ENCODE measurements at regions of chr9 and their contacts with region 1.

Region 1: DNA sequence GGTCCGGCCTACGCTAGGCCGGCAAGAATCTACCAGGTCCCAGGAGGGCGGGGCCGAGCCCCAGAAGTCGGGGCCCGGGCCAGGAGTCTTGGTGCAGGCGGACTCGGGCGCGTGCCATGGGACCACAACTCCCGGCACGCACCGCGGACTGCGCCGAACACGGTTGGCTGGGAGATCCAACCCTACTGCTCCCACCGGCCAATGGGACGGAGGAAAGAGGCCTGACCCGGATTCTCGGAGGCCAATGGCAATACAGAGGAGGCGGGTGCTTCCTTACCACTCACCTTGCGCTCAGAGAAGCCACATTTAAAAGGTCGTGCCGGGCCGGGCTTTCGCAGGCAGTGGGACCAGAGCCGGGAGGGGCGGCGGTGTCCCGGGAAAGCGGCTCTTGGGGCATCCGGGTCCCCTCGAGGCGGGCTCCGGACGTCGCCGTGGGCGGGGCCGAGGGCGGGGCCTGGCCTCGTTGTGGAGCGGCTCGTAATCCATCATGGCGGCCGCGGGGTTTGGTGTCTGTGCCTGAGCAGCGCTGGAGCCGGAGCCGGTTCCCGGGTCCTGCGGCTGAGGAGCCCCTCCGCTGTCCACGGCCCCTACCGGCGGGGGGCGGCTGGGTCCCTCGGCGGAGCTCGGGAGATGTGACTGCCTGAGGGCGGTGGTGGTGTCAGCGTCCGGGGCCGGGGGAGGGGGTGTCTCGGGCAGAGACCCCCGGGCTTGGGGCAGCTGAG is 19.1 kb downstream of the EXOSC2 start:
- DNase-seq: peak; percentile 91 to 97
- ATAC-seq: peak; percentile 96 to 99 (median 97)
- H3K4me3 ChIP-seq: peak overlapping the region; percentile 73
- H3K4me3 Mint-ChIP-seq: peak overlapping the region; percentile 96
- H3K27ac ChIP-seq: peak overlapping the region; percentile 92
- H3K27ac Mint-ChIP-seq: peak overlapping the region; percentile 90 to 95
- H3K4me1 ChIP-seq: peaks cover 19% of the 10 kb centered on the region
- H3K4me1 Mint-ChIP-seq: peaks cover 30 to 33% of the 10 kb centered on the region in 2 donors
- H3K27me3 ChIP-seq: no peaks in the 10 kb centered on the region
- H3K27me3 Mint-ChIP-seq: no peaks in the 10 kb centered on the region
- CTCF ChIP-seq: no peak

Region 2: DNA sequence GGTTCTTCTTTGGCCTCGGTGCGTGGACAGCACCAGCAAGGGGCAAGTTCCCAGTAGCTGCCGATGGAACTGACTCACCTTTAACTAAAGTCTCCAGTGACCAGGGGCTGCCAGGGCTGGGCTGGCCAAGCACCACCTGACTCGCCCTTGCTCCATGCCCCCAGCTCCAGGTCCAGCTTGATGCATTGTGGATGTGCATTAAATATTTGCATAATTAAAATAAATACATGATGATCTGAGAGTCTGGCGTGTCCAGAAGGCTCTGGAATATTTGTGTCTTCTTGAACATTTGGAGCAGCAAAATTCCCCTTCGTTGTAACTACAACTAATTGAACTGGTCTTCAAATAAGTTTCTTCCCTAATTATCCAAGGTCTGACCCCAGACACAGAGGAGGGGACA is 57.8 kb before region 1 on chr9:
- intact Hi-C with region 1: no loop called
- DNase-seq: no peak
- ATAC-seq: no peak
- H3K4me3 ChIP-seq: no peak overlapping the region
- H3K4me3 Mint-ChIP-seq: no peak overlapping the region
- H3K27ac ChIP-seq: no peak overlapping the region
- H3K27ac Mint-ChIP-seq: no peak overlapping the region
- H3K4me1 ChIP-seq: no peaks in the 10 kb centered on the region
- H3K4me1 Mint-ChIP-seq: peaks cover 0 to 4% of the 10 kb centered on the region in 2 donors
- H3K27me3 ChIP-seq: peaks cover 9% of the 10 kb centered on the region
- H3K27me3 Mint-ChIP-seq: peaks cover 22 to 30% of the 10 kb centered on the region in 2 donors
- CTCF ChIP-seq: no peak

Region 3: GRCh38 chr9:130693426-130694191 is 19.1 kb before region 1 on chr9 and contains the start of gene EXOSC2:
- intact Hi-C with region 1: loop called (anchors 1 kb)
- DNase-seq: peak; percentile 82 to 99
- ATAC-seq: peak; percentile 99 to 100 (median 99)
- H3K4me3 ChIP-seq: peak within 1 kb of the TSS; percentile 89
- H3K4me3 Mint-ChIP-seq: peak within 1 kb of the TSS; percentile 99
- H3K27ac ChIP-seq: peak within 1 kb of the TSS; percentile 57
- H3K27ac Mint-ChIP-seq: peak within 1 kb of the TSS; percentile 88 to 89
- H3K4me1 ChIP-seq: peaks cover 23% of the 10 kb centered on the region
- H3K4me1 Mint-ChIP-seq: peaks cover 36 to 42% of the 10 kb centered on the region in 2 donors
- H3K27me3 ChIP-seq: no peaks in the 10 kb centered on the region
- H3K27me3 Mint-ChIP-seq: peaks cover 0 to 5% of the 10 kb centered on the region in 2 donors
- CTCF ChIP-seq: no peak
- total RNA-seq, gene EXOSC2: 40.7 to 49.0 (median 47.1) TPM

Region 4: GRCh38 chr9:130763367-130764200 is 50.9 kb after region 1 on chr9:
- intact Hi-C with region 1: no loop called
- DNase-seq: no peak
- ATAC-seq: no peak
- H3K4me3 ChIP-seq: no peak overlapping the region
- H3K4me3 Mint-ChIP-seq: no peak overlapping the region
- H3K27ac ChIP-seq: no peak overlapping the region
- H3K27ac Mint-ChIP-seq: no peak overlapping the region
- H3K4me1 ChIP-seq: peaks cover 16% of the 10 kb centered on the region
- H3K4me1 Mint-ChIP-seq: peaks cover 37 to 74% of the 10 kb centered on the region in 2 donors
- H3K27me3 ChIP-seq: no peaks in the 10 kb centered on the region
- H3K27me3 Mint-ChIP-seq: no peaks in the 10 kb centered on the region
- CTCF ChIP-seq: no peak

Region 5: GRCh38 chr9:131197160-131197911 is 484.6 kb after region 1 on chr9:
- intact Hi-C with region 1: no loop called
- DNase-seq: no peak
- ATAC-seq: no peak
- H3K4me3 ChIP-seq: no peak overlapping the region
- H3K4me3 Mint-ChIP-seq: no peak overlapping the region
- H3K27ac ChIP-seq: no peak overlapping the region
- H3K27ac Mint-ChIP-seq: no peak overlapping the region
- H3K4me1 ChIP-seq: no peaks in the 10 kb centered on the region
- H3K4me1 Mint-ChIP-seq: peaks cover 0 to 10% of the 10 kb centered on the region in 2 donors
- H3K27me3 ChIP-seq: no peaks in the 10 kb centered on the region
- H3K27me3 Mint-ChIP-seq: no peaks in the 10 kb centered on the region
- CTCF ChIP-seq: no peak

Measured in natural killer cell (primary cell).